MCF 10A (cell line): ENCODE measurements at regions of chr1 and their contacts with region 1.

Region 1: GRCh38 chr1:208880433-208881100 is 636.4 kb upstream of the PLXNA2 start:
- DNase-seq: peak; percentile 96
- H3K4me3 Mint-ChIP-seq: no peak overlapping the region
- H3K27ac Mint-ChIP-seq: peak overlapping the region; percentile 33
- H3K4me1 Mint-ChIP-seq: peaks cover 39% of the 10 kb centered on the region
- H3K27me3 Mint-ChIP-seq: no peaks in the 10 kb centered on the region
- CTCF ChIP-seq: no peak

Region 2: DNA sequence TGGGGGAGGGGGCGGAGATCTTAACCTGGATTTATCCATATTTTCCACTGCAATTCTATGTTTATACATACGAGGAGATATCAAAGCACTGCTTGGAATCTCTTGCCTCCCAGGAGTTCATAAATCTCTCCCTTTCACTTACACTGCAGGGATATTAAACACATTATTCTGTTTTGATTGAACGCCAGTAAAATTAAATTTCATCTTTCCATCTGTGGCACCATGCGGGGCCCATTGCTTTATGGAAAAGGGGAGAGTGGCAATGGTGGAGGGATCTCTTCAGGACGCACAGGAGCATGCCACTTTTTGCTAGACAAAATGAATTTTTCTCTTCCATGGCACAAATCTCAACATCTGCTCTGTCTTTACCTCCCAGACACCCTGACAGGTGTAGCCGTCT is 11.6 kb after region 1 on chr1:
- CTCF ChIA-PET with region 1: interaction called, 4 read pairs
- POLR2A ChIA-PET with region 1: interaction called, 12 read pairs
- intact Hi-C with region 1: no loop called
- DNase-seq: no peak
- H3K4me3 Mint-ChIP-seq: no peak overlapping the region
- H3K27ac Mint-ChIP-seq: no peak overlapping the region
- H3K4me1 Mint-ChIP-seq: no peaks in the 10 kb centered on the region
- H3K27me3 Mint-ChIP-seq: no peaks in the 10 kb centered on the region
- CTCF ChIP-seq: no peak

Region 3: DNA sequence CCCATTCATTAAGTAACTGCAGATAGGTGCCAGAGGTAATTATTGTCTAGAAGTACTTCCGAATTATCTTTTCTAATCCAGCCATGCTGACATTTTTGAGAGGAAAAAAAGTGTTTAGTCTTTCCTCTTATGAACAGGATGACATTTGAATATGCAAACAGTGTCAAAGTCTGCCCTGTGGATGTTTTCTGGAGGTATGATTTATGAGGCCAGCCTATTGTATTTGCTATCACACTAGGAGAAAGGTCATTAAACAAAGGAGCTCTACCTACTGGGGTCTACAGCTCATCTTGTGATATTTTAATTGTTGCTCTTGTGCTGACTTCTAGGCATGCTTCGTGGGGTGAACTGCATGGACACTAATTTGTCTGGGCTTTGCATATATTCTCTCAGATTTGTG is 143.2 kb after region 1 on chr1:
- CTCF ChIA-PET with region 1: no interaction called
- POLR2A ChIA-PET with region 1: no interaction called
- intact Hi-C with region 1: no loop called
- DNase-seq: no peak
- H3K4me3 Mint-ChIP-seq: no peak overlapping the region
- H3K27ac Mint-ChIP-seq: no peak overlapping the region
- H3K4me1 Mint-ChIP-seq: no peaks in the 10 kb centered on the region
- H3K27me3 Mint-ChIP-seq: no peaks in the 10 kb centered on the region
- CTCF ChIP-seq: no peak